HepG2 (cell line): ENCODE measurements at regions of chr4 and their contacts with region 1.

Region 1: DNA sequence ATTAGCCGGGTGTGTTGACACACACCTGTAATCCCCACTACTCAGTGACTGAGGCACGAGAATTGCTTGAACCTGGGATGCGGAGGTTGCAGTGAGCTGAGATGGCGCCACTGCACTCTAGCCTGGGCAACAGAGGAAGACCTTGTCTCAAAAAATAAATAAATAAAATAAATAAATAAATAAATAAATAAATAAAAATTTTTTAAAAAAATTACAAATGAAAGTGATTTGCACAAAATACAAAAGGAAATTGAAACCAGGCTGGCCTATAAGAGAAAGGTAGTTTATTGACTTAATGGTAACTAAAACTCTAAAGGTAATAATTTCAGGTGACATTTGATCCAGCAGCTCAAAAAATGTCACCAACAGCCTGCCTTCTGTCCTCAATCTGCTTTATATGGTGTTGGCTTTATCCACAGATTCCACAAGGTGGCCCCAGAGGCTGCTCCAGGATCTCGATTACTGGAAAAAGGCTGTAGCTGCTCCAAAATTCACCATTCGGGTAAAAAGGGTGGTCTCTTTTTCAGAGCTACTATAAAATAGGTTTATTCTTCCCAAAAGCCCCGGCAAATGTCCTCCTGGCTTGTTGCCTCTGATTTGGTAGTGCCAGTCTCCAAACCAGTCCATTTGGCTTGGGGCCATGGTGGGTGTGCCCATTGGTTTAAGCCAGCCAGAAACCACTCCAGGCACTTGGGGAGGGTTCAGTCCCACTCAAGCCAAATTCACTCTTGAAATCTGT is 61.4 kb upstream of the TRIM2 start:
- DNase-seq: peak; percentile 63
- ATAC-seq: peak; percentile 88
- H3K4me3 ChIP-seq: no peak overlapping the region; a peak in 1 of 6 replicates
- H3K27ac ChIP-seq: no peak overlapping the region
- H3K4me1 ChIP-seq: peaks cover 14% of the 10 kb centered on the region
- H3K27me3 ChIP-seq: 0 out of 5 replicates have a peak, but pooled peaks cover 0 to 2% of the 10 kb centered on the region in 2 experiments
- CTCF ChIP-seq: peak; percentile 77
- EP300 ChIP-seq: no peak
- POLR2A ChIP-seq: no peak
- RAD21 ChIP-seq: peak; percentile 63

Region 2: GRCh38 chr4:153067380-153067779 is 75.5 kb before region 1 on chr4:
- CTCF ChIA-PET with region 1: no interaction called
- POLR2A ChIA-PET with region 1: no interaction called
- in situ Hi-C with region 1: no loop called
- intact Hi-C with region 1: no loop called
- DNase-seq: peak; percentile 85
- ATAC-seq: peak; percentile 91
- H3K4me3 ChIP-seq: peak overlapping the region in 2 of 3 experiments; percentile 55 to 57; a peak in 3 of 6 replicates
- H3K27ac ChIP-seq: peak overlapping the region; percentile 66
- H3K4me1 ChIP-seq: peaks cover 61% of the 10 kb centered on the region
- H3K27me3 ChIP-seq: no peaks in the 10 kb centered on the region
- CTCF ChIP-seq: no peak
- EP300 ChIP-seq: peak in 1 of 2 experiments; percentile 74; a peak in 1 of 4 replicates
- POLR2A ChIP-seq: 0 out of 4 replicates have a peak, but pooled peaks of 1 of the 2 experiments have one; percentile 24
- RAD21 ChIP-seq: 0 out of 2 replicates have a peak, but pooled peaks have one; percentile 23

Region 3: DNA sequence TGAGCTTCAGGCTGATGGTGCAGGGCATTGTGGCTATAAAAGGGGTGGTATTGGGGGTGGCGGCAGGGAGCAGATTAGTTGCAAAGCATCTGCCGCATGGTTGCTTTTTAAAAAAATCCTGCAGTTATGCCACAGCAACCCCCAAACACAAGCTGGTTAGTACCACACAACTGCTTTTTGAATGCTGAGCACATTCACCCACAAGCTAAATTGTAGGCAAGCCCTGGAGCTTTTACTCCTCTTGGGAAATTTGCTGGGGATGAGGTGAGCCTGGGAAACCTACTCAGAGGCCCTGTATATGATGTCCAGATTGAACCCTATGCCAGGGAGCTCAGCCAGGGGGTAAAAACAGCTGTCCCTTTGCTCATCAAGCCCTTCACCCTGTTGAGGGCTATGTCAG is 27.5 kb after region 1 on chr4:
- CTCF ChIA-PET with region 1: no interaction called
- POLR2A ChIA-PET with region 1: no interaction called
- in situ Hi-C with region 1: no loop called
- intact Hi-C with region 1: no loop called
- DNase-seq: no peak
- ATAC-seq: no peak
- H3K4me3 ChIP-seq: no peak overlapping the region
- H3K27ac ChIP-seq: no peak overlapping the region
- H3K4me1 ChIP-seq: peaks cover 13% of the 10 kb centered on the region
- H3K27me3 ChIP-seq: no peaks in the 10 kb centered on the region
- CTCF ChIP-seq: no peak
- EP300 ChIP-seq: no peak
- POLR2A ChIP-seq: no peak
- RAD21 ChIP-seq: no peak

Region 4: GRCh38 chr4:153266988-153267387 is 124.1 kb after region 1 on chr4:
- CTCF ChIA-PET with region 1: no interaction called
- POLR2A ChIA-PET with region 1: no interaction called
- in situ Hi-C with region 1: no loop called
- intact Hi-C with region 1: no loop called
- DNase-seq: no peak
- ATAC-seq: no peak
- H3K4me3 ChIP-seq: no peak overlapping the region
- H3K27ac ChIP-seq: no peak overlapping the region
- H3K4me1 ChIP-seq: no peaks in the 10 kb centered on the region
- H3K27me3 ChIP-seq: no peaks in the 10 kb centered on the region
- CTCF ChIP-seq: no peak
- EP300 ChIP-seq: no peak
- POLR2A ChIP-seq: no peak
- RAD21 ChIP-seq: no peak

Region 5: GRCh38 chr4:153318696-153319320 is 175.9 kb after region 1 on chr4:
- CTCF ChIA-PET with region 1: interaction called, 44 read pairs
- POLR2A ChIA-PET with region 1: no interaction called
- in situ Hi-C with region 1: loop called (anchors 5 kb)
- intact Hi-C with region 1: loop called (anchors 1 kb)
- DNase-seq: peak; percentile 40
- ATAC-seq: peak; percentile 78
- H3K4me3 ChIP-seq: no peak overlapping the region
- H3K27ac ChIP-seq: no peak overlapping the region
- H3K4me1 ChIP-seq: peaks cover 13% of the 10 kb centered on the region
- H3K27me3 ChIP-seq: no peaks in the 10 kb centered on the region
- CTCF ChIP-seq: peak; percentile 67
- EP300 ChIP-seq: no peak
- POLR2A ChIP-seq: no peak
- RAD21 ChIP-seq: 0 out of 2 replicates have a peak, but pooled peaks have one; percentile 41

Region 6: DNA sequence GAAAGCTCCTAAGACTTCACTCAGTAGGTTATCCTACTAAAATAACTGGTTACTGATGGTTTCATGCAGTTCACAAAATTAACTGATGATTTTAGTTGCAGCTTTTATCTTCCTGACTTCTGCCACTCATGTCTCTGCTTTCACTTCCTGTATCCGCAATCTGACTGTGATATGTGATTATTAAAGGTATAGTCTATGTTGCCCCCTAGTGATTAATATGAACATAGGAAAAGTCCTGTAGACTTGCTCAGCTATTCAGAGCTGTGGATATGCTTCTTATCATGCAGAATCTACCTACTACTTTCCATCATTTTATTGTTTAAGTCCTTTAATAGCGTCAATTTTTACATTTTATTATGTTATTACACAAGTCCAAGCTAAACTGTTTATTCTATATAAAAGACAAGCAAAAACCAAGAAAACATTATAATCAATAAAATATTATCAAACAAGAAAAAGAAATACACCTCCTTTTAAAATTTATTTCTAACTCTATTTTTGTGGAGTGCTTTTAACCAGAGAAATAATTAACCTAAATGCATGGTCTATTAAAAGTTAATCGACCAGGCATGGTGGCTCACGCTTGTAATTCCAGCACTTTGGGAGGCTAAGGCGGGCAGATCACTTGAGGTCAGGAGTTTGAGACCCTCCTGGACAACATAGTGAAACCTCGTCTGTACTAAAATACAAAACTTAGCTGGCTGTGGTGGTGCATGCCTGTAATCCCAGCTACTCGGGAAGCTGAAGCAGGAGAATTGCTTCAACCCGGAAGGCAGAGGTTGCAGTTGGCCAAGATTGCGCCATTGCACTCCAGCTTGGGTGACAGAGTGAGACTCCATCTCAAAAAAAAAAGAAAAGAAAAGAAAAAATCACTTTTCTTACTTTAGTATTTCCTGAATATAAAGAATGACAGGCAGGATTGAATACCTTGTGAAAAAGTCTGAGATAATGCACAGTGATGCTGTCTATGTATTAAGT is 500.8 kb after region 1 on chr4:
- CTCF ChIA-PET with region 1: no interaction called
- POLR2A ChIA-PET with region 1: no interaction called
- in situ Hi-C with region 1: no loop called
- intact Hi-C with region 1: loop called (anchors 5 kb)
- DNase-seq: peak; percentile 66
- ATAC-seq: peak; percentile 68
- H3K4me3 ChIP-seq: peak overlapping the region in 1 of 3 experiments; percentile 16; a peak in 1 of 6 replicates
- H3K27ac ChIP-seq: no peak overlapping the region
- H3K4me1 ChIP-seq: peaks cover 22% of the 10 kb centered on the region
- H3K27me3 ChIP-seq: no peaks in the 10 kb centered on the region; a peak in 1 of 5 replicates
- CTCF ChIP-seq: peak; percentile 60
- EP300 ChIP-seq: no peak
- POLR2A ChIP-seq: no peak
- RAD21 ChIP-seq: no peak